ENCODE measurements at regions of chr20 and their contacts with region 1.

Region 1: DNA sequence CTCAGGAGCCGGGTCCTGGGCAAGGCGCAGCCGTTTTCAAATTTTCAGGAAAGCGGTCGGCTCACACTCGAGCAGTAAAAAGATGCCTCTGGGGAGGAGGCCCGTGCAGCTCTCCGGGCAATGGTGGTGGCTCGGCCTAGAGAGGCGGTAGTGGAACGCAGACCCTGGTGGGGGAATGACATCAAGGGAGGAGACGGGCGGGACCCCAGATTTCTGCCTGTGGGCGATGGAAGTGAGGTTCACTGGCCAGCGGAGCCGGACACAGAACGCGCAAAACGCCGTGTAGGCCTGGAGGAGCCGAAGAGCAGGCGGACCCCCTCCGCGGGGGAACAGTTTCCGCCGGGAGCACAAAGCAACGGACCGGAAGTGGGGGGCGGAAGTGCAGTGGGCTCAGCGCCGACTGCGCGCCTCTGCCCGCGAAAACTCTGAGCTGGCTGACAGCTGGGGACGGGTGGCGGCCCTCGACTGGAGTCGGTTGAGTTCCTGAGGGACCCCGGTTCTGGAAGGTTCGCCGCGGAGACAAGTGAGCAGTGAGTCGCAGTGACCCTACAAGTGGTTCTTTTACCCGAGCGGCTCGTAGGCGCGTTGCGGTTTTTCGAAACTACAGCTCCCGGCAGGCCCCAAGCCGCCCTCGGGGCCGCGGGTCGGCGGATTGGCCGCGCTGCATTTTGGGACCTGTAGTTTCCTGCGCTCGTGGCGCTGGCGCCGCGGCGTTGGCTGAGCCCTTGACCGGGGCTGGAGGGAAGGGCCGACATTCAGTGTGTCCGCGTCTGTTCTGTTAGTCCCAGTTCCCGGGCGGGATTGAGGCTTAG is at the start of gene RTEL1:
- DNase-seq: peak; percentile 82 to 97 (median 93)

Region 2: GRCh38 chr20:63553227-63553932 is 104.8 kb before region 1 on chr20:
- intact Hi-C with region 1: no loop called
- DNase-seq: peak in 11 of 42 donors; percentile 14 to 48 (median 30)

Region 3: GRCh38 chr20:63707549-63708300 is 49.6 kb after region 1 on chr20 and contains the starts of genes ARFRP1 and ZGPAT:
- intact Hi-C with region 1: loop called (anchors 5 kb)
- DNase-seq: peak; percentile 80 to 98 (median 95)

Measured in head of caudate nucleus (tissue), 42 donors.